T-cell (primary cell): ENCODE measurements at regions of chr7 and their contacts with region 1.

Region 1: GRCh38 chr7:131188367-131189339 is 139.0 kb upstream of the MKLN1 start:
- DNase-seq: peak in 34 of 35 experiments; percentile 5 to 86 (median 32)
- ATAC-seq: peak; percentile 92 to 94 (median 92)
- H3K4me3 ChIP-seq: no peak overlapping the region
- H3K4me3 Mint-ChIP-seq: peak overlapping the region in 1 of 3 donors; percentile 37
- H3K27ac ChIP-seq: peak overlapping the region; percentile 82
- H3K27ac Mint-ChIP-seq: peak overlapping the region; percentile 79 to 87
- H3K4me1 ChIP-seq: peaks cover 0 to 27% of the 10 kb centered on the region in 2 experiments
- H3K4me1 Mint-ChIP-seq: peaks cover 27 to 49% (median 42%) of the 10 kb centered on the region in 3 donors
- H3K27me3 ChIP-seq: peaks cover 0 to 2% of the 10 kb centered on the region in 2 experiments
- H3K27me3 Mint-ChIP-seq: no peaks in the 10 kb centered on the region

Region 2: DNA sequence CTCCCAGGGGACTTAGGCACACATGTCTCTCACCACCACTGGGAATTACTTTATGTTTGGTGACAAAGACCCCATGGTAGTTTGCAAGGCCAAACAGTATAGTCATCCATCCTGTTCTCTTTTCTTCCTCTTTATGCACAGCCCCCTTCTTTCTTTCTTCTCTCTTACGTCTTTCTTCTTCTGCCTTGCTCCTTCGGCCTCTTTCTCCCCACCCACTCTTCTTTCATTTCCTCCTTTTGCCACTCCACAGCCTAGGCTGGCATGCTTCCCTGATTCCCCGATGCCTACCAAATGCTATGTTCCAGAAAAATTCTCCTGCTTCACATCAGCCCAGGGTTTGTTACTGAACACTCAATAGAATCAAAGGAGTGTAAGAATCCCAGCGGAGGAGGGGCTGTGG is 76.6 kb after region 1 on chr7:
- CTCF ChIA-PET with region 1: no interaction called
- POLR2A ChIA-PET with region 1: no interaction called
- DNase-seq: no peak
- ATAC-seq: no peak
- H3K4me3 ChIP-seq: no peak overlapping the region
- H3K4me3 Mint-ChIP-seq: no peak overlapping the region
- H3K27ac ChIP-seq: no peak overlapping the region
- H3K27ac Mint-ChIP-seq: no peak overlapping the region
- H3K4me1 ChIP-seq: no peaks in the 10 kb centered on the region
- H3K4me1 Mint-ChIP-seq: no peaks in the 10 kb centered on the region
- H3K27me3 ChIP-seq: no peaks in the 10 kb centered on the region
- H3K27me3 Mint-ChIP-seq: peaks cover 0 to 1% of the 10 kb centered on the region in 2 donors

Region 3: DNA sequence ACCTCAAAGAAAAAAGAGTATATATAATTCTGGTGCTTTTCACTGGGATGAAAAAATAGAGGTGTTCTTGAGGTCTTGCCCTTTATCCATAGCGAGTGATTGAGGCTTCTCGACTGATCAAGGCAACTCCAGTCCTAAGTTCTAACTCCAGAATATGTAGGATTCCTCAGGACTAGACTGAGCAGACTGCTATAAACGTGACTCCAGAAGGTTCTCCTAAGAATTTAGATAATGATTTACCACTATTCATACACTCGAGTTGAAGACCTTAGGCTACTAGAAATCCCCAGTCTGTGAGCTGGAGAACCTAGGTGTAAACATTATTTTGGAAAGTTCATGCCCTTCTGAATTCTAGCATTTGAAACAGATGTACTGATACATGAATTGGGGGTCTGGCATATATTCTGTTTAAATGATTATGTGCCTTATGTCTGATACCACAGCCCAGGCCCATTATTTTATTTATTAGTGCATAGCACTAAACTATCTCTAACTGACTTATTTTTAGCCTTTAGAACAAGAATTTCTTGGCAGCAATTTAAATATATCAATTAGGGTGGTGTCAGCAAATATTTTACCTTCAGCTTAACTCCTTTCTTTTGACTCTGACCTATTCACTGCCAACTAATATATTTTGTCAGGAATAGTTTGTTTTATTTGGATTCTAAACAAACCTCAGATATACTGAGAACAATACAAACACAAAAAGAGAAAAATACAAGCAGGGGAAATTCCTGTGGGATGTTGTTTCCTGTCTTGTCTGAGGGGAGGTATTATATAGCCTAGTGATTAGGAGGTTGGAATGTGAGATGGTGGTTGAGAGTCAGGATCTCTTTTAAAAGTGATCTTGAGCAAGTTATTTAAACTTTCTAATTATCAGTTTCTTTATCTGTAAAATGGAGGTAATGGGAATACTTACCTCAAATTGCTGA is 292.0 kb after region 1 on chr7:
- CTCF ChIA-PET with region 1: no interaction called
- POLR2A ChIA-PET with region 1: interaction called in 1 of 2 experiments, 11 read pairs
- DNase-seq: no peak
- ATAC-seq: no peak
- H3K4me3 ChIP-seq: no peak overlapping the region
- H3K4me3 Mint-ChIP-seq: no peak overlapping the region
- H3K27ac ChIP-seq: no peak overlapping the region
- H3K27ac Mint-ChIP-seq: no peak overlapping the region
- H3K4me1 ChIP-seq: no peaks in the 10 kb centered on the region
- H3K4me1 Mint-ChIP-seq: no peaks in the 10 kb centered on the region
- H3K27me3 ChIP-seq: no peaks in the 10 kb centered on the region
- H3K27me3 Mint-ChIP-seq: no peaks in the 10 kb centered on the region